Activated CD4-positive, alpha-beta T cell treated with anti-CD3 and anti-CD28 coated beads, Interleukin-2, amount 10 ng/mL, durations not matched to agents 24 days and 14 days (primary cell): ENCODE measurements at regions of chr2 and their contacts with region 1.

Region 1: GRCh38 chr2:42652086-42652485 is 83.7 kb downstream of the MTA3 start:
- DNase-seq: peak; percentile 76
- H3K4me3 Mint-ChIP-seq: peak overlapping the region; percentile 41
- H3K27ac Mint-ChIP-seq: peak overlapping the region; percentile 54
- H3K4me1 Mint-ChIP-seq: peaks cover 39% of the 10 kb centered on the region
- H3K27me3 Mint-ChIP-seq: no peaks in the 10 kb centered on the region

Region 2: GRCh38 chr2:42328148-42328833 is 323.8 kb before region 1 on chr2:
- intact Hi-C with region 1: no loop called
- DNase-seq: no peak
- H3K4me3 Mint-ChIP-seq: no peak overlapping the region
- H3K27ac Mint-ChIP-seq: peak overlapping the region; percentile 20
- H3K4me1 Mint-ChIP-seq: peaks cover 14% of the 10 kb centered on the region
- H3K27me3 Mint-ChIP-seq: no peaks in the 10 kb centered on the region

Region 3: GRCh38 chr2:42568401-42569115 is 83.5 kb before region 1 on chr2 and contains the start of gene MTA3:
- intact Hi-C with region 1: loop called (anchors 5 kb)
- DNase-seq: peak; percentile 91
- H3K4me3 Mint-ChIP-seq: peak within 1 kb of the TSS; percentile 91
- H3K27ac Mint-ChIP-seq: peak within 1 kb of the TSS; percentile 94
- H3K4me1 Mint-ChIP-seq: peaks cover 23% of the 10 kb centered on the region
- H3K27me3 Mint-ChIP-seq: no peaks in the 10 kb centered on the region
- total RNA-seq, gene MTA3: 31.7 and 36.6 TPM in 2 replicates

Region 4: DNA sequence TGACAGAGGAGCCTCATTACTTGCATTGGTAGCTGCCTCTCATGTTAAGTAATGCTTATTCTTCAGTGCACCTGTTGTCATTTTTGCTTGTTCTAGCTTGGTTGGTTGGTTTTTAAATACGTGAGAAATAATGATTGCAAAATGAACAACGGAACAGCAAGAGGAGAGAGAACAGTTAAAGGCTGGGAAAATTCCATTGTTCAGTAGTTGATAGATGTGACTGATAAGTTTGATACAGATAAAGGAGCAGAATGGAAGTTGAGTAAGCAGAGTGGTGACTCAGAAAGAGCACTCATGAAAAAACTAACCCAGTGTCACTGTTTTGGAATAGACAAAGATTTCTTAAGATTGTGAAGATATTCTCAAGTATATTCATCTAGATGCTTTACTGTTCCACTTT is 33.1 kb before region 1 on chr2:
- intact Hi-C with region 1: loop called (anchors 2 kb)
- DNase-seq: no peak
- H3K4me3 Mint-ChIP-seq: no peak overlapping the region
- H3K27ac Mint-ChIP-seq: peak overlapping the region; percentile 30
- H3K4me1 Mint-ChIP-seq: peaks cover 6% of the 10 kb centered on the region
- H3K27me3 Mint-ChIP-seq: no peaks in the 10 kb centered on the region